ENCODE measurements at regions of chr10 and their contacts with region 1.

Region 1: DNA sequence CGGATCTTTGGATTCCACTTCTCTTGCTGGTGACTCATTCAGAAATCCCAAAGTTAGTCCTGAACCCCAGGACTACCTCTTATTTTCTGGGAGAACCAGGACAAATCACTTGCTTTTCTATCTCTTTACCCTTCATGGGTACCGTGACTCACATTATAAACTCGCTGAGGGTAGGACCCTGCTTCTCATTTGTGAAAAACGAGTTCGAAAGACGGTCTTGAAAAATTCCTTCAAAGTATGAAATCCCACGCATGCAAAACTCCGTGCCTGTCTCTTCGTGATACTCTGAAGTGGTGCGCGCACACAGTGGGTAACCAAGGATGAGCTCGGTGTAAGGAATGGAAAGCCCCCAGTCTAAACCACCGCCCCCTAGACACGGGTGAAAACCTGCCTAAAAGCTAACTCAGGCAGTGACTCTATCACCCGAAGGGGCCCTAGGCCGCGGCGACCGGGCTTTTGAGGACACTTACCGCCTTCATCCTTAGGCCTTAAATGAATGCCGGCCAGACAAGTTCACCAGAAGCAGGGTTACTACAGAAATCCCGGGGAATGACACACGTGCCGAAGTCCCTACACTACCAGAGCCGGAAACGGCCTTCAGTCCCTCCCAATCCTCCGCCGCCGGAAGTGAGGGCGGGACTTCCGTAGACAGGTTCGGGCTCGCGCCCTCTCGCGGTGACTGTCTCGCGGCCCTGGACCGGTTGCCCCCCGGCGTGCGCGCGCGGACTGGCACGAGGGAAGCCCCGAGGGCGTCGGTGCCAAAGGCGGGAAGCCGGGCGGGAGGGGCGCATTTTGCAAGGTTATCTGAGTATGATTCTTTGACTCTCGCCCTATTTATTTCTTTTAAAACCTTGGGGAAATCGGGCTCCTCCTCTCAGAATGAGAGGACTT is at the start of gene NOC3L:
- DNase-seq: peak; percentile 92
- H3K4me3 ChIP-seq: peak within 1 kb of the TSS; percentile 46 to 87 (median 74)
- H3K27ac ChIP-seq: peak within 1 kb of the TSS; percentile 37
- H3K4me1 ChIP-seq: peaks cover 14% of the 10 kb centered on the region
- H3K27me3 ChIP-seq: peaks cover 3 to 7% of the 10 kb centered on the region in 2 experiments
- CTCF ChIP-seq: peak; percentile 75
- POLR2A ChIP-seq: peak; percentile 90
- total RNA-seq, gene NOC3L: 19.8 and 20.5 TPM in 2 replicates

Region 2: GRCh38 chr10:93309062-93309461 is 1053.5 kb before region 1 on chr10:
- CTCF ChIA-PET with region 1: no interaction called
- POLR2A ChIA-PET with region 1: no interaction called
- dilution Hi-C with region 1: no loop called
- intact Hi-C with region 1: no loop called
- DNase-seq: no peak
- H3K4me3 ChIP-seq: no peak overlapping the region
- H3K27ac ChIP-seq: no peak overlapping the region
- H3K4me1 ChIP-seq: no peaks in the 10 kb centered on the region
- H3K27me3 ChIP-seq: no peaks in the 10 kb centered on the region
- CTCF ChIP-seq: no peak
- POLR2A ChIP-seq: no peak

Region 3: DNA sequence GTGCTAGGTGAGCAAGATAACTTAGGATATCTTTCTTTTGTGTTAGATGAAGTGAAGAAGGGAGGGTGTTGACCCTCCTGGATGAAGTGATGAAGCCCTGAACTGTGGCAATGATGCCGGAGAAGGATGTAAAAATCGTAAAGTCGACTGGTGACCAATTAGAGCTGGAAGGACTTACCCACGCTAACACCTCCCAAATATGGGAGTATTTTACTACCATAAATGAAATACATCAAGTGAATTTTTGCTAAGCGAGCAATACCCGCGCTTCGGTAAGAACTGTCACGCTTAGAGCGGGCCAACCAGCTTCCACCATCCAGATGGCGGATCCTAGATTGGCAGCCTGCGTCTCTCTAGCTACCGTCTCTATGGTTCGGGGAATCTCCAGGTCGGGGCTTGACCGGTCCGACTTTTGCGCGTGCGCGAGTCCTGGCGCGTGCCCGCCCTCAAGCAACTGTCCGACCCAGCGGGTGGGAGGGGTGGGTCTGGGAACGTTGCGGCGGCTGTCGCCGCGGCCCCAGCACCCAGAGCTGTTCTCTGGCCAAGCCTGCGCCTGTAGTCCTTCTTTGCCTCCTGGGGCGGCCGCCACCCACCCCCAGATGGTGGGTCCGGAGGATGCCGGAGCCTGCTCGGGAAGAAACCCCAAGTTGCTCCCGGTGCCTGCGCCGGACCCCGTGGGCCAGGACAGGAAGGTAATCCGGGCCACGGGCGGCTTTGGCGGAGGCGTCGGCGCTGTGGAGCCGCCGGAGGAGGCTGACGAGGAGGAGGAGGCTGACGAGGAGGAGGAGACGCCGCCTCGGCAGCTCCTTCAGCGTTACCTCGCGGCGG is 39.6 kb after region 1 on chr10 and contains the start of gene TBC1D12:
- CTCF ChIA-PET with region 1: interaction called, 10 read pairs
- POLR2A ChIA-PET with region 1: no interaction called
- dilution Hi-C with region 1: no loop called
- intact Hi-C with region 1: loop called (anchors 1 kb)
- DNase-seq: peak; percentile 96
- H3K4me3 ChIP-seq: peak within 1 kb of the TSS; percentile 71 to 95 (median 82)
- H3K27ac ChIP-seq: peak within 1 kb of the TSS; percentile 67
- H3K4me1 ChIP-seq: peaks cover 3% of the 10 kb centered on the region
- H3K27me3 ChIP-seq: no peaks in the 10 kb centered on the region
- CTCF ChIP-seq: no peak
- POLR2A ChIP-seq: peak; percentile 83
- total RNA-seq, gene TBC1D12: 7.1 and 7.3 TPM in 2 replicates